Activated T-helper 2 cell treated with anti-CD3 and anti-CD28 coated beads, Interferon-gamma antibody, Interleukin-2, Interleukin-4, amounts not matched to agents 10 μg/mL and 5 μg/mL and 100 μg/mL, durations not matched to agents 14 hours and 24 hours and 36 hours (primary cell): ENCODE measurements at regions of chr11 and their contacts with region 1.

Region 1: DNA sequence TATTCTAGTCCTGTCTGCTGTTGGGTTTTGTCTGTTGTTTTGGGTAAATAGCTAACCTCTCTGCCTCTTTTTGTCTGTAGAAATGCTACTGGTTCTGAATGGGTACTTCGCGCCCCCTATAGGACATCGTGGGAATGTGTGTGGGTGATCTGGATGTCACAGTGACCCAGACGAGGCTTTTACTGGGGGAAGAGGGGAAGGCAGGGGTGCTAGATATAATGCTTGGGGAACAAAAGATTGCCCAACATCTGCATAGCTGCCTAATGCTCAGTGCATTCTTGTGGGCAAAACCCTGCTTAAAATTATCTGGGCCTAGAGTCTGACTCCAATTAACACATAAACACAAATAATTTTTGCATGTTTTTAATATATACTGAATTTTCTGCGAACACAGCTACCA is 57.7 kb downstream of the BMAL1 start:
- DNase-seq: peak; percentile 51
- H3K4me3 Mint-ChIP-seq: no peak overlapping the region
- H3K27ac Mint-ChIP-seq: no peak overlapping the region
- H3K4me1 Mint-ChIP-seq: peaks cover 44% of the 10 kb centered on the region
- H3K27me3 Mint-ChIP-seq: no peaks in the 10 kb centered on the region

Region 2: GRCh38 chr11:13183094-13183825 is 152.1 kb before region 1 on chr11:
- intact Hi-C with region 1: loop called (anchors 2 kb)
- DNase-seq: no peak
- H3K4me3 Mint-ChIP-seq: no peak overlapping the region
- H3K27ac Mint-ChIP-seq: no peak overlapping the region
- H3K4me1 Mint-ChIP-seq: peaks cover 6% of the 10 kb centered on the region
- H3K27me3 Mint-ChIP-seq: peaks cover 9% of the 10 kb centered on the region

Region 3: GRCh38 chr11:13276832-13277767 is 58.2 kb before region 1 on chr11:
- intact Hi-C with region 1: loop called (anchors 2 kb)
- DNase-seq: peak; percentile 97
- H3K4me3 Mint-ChIP-seq: peak overlapping the region; percentile 98
- H3K27ac Mint-ChIP-seq: peak overlapping the region; percentile 79
- H3K4me1 Mint-ChIP-seq: peaks cover 45% of the 10 kb centered on the region
- H3K27me3 Mint-ChIP-seq: peaks cover 57% of the 10 kb centered on the region

Region 4: DNA sequence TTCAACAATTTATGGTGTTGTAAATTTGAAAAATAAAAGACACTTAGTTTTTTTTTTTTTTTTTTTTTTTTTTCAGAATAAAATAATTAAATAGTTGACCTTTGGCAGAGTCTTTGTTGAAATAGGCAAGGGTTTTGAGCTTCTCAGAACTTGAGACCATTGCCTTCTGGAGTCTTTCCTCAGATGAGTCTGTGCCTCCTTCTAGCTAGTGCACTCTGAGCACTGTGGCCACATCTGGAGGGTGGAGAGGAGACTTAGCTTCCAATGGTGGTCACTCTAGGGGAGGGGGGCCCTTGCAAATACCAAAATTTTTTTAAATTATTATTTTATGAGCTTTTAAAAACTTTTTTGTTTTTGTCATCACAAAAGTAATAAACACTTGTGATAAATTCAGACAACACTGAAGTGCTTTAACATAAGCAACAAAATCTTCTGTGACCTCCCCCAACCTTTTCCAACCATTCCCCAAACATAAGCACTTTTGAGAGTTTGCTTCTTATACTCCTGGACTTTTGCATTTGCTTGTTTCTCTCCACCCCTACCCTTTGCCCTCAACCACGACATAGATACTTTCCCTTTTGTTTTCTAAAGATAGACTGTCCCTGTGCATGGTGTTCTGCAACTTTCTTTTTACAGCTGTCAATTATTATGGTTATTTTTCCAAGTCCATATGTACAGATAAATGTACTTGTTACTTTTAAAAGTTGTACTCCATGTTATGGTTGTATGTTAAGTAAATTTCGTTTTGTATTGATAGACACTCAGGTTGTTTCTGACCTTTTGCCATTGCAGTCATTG is 16.6 kb before region 1 on chr11:
- intact Hi-C with region 1: loop called (anchors 2 kb)
- DNase-seq: no peak
- H3K4me3 Mint-ChIP-seq: peak overlapping the region; percentile 27
- H3K27ac Mint-ChIP-seq: peak overlapping the region; percentile 55
- H3K4me1 Mint-ChIP-seq: peaks cover 22% of the 10 kb centered on the region
- H3K27me3 Mint-ChIP-seq: no peaks in the 10 kb centered on the region